ENCODE measurements at regions of chr19 and their contacts with region 1.

Region 1: GRCh38 chr19:3762501-3763459 is at the start of gene MRPL54:
- DNase-seq: peak; percentile 99
- H3K4me3 Mint-ChIP-seq: peak within 1 kb of the TSS; percentile 96
- H3K27ac Mint-ChIP-seq: peak within 1 kb of the TSS; percentile 100
- H3K4me1 Mint-ChIP-seq: peaks cover 50% of the 10 kb centered on the region
- H3K27me3 Mint-ChIP-seq: peaks cover 6% of the 10 kb centered on the region

Region 2: GRCh38 chr19:3809881-3810707 is 47.3 kb after region 1 on chr19:
- CTCF ChIA-PET with region 1: interaction called, 11 read pairs
- DNase-seq: no peak
- H3K4me3 Mint-ChIP-seq: no peak overlapping the region
- H3K27ac Mint-ChIP-seq: no peak overlapping the region
- H3K4me1 Mint-ChIP-seq: peaks cover 54% of the 10 kb centered on the region
- H3K27me3 Mint-ChIP-seq: no peaks in the 10 kb centered on the region

Region 3: GRCh38 chr19:3821857-3822364 is 59.1 kb after region 1 on chr19:
- CTCF ChIA-PET with region 1: interaction called, 50 read pairs
- DNase-seq: peak; percentile 93
- H3K4me3 Mint-ChIP-seq: no peak overlapping the region
- H3K27ac Mint-ChIP-seq: peak overlapping the region; percentile 77
- H3K4me1 Mint-ChIP-seq: peaks cover 23% of the 10 kb centered on the region
- H3K27me3 Mint-ChIP-seq: peaks cover 24% of the 10 kb centered on the region